ENCODE measurements at regions of chr16 and their contacts with region 1.

Region 1: GRCh38 chr16:4506450-4506849 is 30.3 kb downstream of the HMOX2 start:
- DNase-seq: peak; percentile 62 to 77
- ATAC-seq: peak; percentile 89 to 95
- H3K4me3 ChIP-seq: no peak overlapping the region
- H3K27ac ChIP-seq: no peak overlapping the region
- H3K4me1 ChIP-seq: peaks cover 4% of the 10 kb centered on the region
- CTCF ChIP-seq: peak; percentile 88
- EP300 ChIP-seq: no peak
- POLR2A ChIP-seq: no peak
- RAD21 ChIP-seq: peak; percentile 76 to 82

Region 2: DNA sequence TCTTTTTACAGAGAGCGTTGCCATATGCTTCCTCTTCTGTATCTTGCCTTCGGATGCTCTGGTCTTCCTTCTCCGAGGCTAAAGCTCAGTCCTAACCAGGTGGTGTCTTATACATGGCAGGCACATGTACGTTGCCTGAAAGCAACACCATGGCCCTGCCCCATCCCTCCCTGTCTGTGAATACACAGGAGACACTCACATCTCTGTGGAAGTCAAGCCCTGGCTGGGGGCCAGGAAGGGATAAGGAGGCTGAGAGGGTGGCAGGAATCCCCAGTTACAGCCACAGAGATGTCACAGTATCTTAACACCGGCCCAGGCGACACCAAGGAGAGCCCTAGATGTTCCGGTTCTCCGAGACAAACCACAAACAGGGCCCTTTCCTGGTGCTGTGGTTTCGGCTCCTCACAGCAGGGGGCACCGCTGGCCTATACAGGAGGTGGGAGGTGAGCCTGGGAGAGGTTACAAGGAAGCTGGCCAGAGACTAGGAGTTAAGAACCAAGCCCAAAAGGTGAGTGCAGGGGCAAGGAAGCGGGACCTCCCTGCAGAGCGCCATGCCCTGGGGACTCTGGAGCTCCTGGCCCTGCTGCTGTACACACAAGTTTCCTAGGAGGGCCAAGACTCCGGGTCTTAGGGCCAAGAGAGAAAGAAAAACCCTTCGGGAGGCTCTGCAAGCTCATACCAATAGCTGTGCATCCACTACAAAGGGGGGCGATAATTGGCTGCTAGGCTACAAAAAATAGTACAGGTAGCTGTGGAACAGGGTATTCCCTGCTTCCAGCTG is 306.3 kb before region 1 on chr16:
- CTCF ChIA-PET with region 1: no interaction called
- POLR2A ChIA-PET with region 1: no interaction called
- DNase-seq: peak; percentile 72 to 74
- ATAC-seq: peak; percentile 96
- H3K4me3 ChIP-seq: no peak overlapping the region
- H3K27ac ChIP-seq: peak overlapping the region in 1 of 2 experiments; percentile 65; a peak in 3 of 6 replicates
- H3K4me1 ChIP-seq: peaks cover 7% of the 10 kb centered on the region; the same call in 2 of the 3 replicates
- CTCF ChIP-seq: peak; percentile 66
- EP300 ChIP-seq: no peak
- POLR2A ChIP-seq: no peak
- RAD21 ChIP-seq: peak; percentile 86 to 89

Region 3: DNA sequence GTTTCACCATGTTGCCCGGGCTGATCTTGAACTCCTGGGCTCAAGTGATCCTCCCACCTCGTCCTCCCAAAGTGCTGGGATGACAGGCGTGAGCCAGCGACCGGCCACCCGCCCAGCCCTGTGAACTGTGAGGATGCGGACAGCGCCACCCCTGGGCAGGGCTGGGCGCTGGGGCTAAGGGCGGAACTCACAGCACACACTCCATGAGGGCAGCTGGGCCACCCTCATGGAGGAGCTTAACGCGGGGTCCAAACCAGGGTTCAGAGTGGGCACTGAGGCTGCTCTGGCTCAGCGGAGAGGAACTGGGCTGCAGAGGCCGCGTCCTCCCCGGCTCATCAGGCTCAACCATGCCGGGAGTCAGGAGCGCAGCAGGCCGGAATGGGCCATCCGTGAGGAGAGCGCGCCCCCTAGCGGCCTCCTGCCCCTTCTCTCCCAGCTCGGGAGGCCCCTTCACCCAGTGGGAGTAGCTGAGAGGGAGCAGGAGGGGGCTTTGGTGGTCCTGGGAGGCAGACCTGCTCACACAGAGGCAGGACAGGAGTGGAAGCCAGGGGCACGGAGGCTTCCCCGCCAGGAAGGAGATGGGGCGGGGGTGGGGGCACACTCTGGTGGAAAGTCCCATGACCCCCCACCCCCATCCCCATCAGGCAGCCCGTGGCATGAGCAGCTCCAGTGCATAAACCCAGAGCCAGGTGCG is 103.9 kb before region 1 on chr16:
- CTCF ChIA-PET with region 1: no interaction called
- POLR2A ChIA-PET with region 1: no interaction called
- DNase-seq: peak; percentile 72 to 88
- ATAC-seq: peak; percentile 90 to 93
- H3K4me3 ChIP-seq: 0 out of 3 replicates have a peak overlapping the region, but pooled peaks have one; percentile 28
- H3K27ac ChIP-seq: peak overlapping the region; percentile 64 to 89
- H3K4me1 ChIP-seq: peaks cover 4% of the 10 kb centered on the region; the same call in 1 of the 3 replicates
- CTCF ChIP-seq: peak; percentile 99
- EP300 ChIP-seq: no peak
- POLR2A ChIP-seq: no peak
- RAD21 ChIP-seq: peak; percentile 93 to 99

Region 4: GRCh38 chr16:4416200-4417032 is 90.0 kb before region 1 on chr16 and contains the start of gene CORO7:
- CTCF ChIA-PET with region 1: no interaction called
- POLR2A ChIA-PET with region 1: no interaction called
- DNase-seq: peak; percentile 89 to 93
- ATAC-seq: peak; percentile 86 to 96
- H3K4me3 ChIP-seq: peak within 1 kb of the TSS; percentile 83
- H3K27ac ChIP-seq: peak within 1 kb of the TSS; percentile 73 to 91
- H3K4me1 ChIP-seq: peaks cover 8% of the 10 kb centered on the region
- CTCF ChIP-seq: no peak
- EP300 ChIP-seq: no peak
- POLR2A ChIP-seq: no peak
- RAD21 ChIP-seq: no peak
- polyA plus RNA-seq, gene CORO7: 5.7 and 6.0 TPM in 2 replicates

Region 5: GRCh38 chr16:4435337-4436067 is 70.9 kb before region 1 on chr16:
- CTCF ChIA-PET with region 1: no interaction called
- POLR2A ChIA-PET with region 1: no interaction called
- DNase-seq: no peak
- ATAC-seq: no peak
- H3K4me3 ChIP-seq: no peak overlapping the region
- H3K27ac ChIP-seq: peak overlapping the region in 1 of 2 experiments; percentile 47; a peak in 3 of 6 replicates
- H3K4me1 ChIP-seq: peaks cover 10% of the 10 kb centered on the region
- CTCF ChIP-seq: no peak
- EP300 ChIP-seq: no peak
- POLR2A ChIP-seq: no peak
- RAD21 ChIP-seq: no peak

Region 6: DNA sequence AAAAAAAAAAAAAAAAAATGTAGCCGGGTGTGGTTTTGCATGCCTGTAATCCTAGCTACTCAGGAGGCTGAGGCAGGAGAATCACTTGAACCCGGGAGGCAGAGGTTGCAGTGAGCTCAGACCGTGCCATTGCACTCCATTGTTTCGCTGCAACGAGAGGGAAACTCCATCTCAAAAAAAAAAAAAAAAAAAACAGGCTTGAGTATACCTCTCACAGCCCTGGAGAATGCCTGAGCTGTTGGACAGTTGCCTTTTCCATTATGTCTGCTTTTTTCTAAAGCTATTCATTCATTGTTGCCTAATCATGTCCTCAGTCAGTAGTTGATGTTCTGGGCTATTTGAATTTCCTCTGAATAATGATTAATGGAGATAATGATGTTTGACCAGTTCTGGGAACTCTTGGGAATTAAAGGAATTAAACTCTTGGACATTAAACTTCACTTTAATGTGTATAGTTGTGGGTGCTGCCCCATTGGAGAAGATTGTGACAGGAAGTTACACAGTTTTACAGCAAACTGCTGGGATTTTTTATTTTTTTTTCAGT is 18.4 kb before region 1 on chr16:
- CTCF ChIA-PET with region 1: interaction called, 27 read pairs
- POLR2A ChIA-PET with region 1: no interaction called
- DNase-seq: no peak
- ATAC-seq: peak in 1 of 2 experiments; percentile 51; a peak in 2 of 6 replicates
- H3K4me3 ChIP-seq: no peak overlapping the region
- H3K27ac ChIP-seq: no peak overlapping the region
- H3K4me1 ChIP-seq: peaks cover 18% of the 10 kb centered on the region; the same call in 2 of the 3 replicates
- CTCF ChIP-seq: no peak
- EP300 ChIP-seq: no peak
- POLR2A ChIP-seq: no peak
- RAD21 ChIP-seq: no peak

Region 7: DNA sequence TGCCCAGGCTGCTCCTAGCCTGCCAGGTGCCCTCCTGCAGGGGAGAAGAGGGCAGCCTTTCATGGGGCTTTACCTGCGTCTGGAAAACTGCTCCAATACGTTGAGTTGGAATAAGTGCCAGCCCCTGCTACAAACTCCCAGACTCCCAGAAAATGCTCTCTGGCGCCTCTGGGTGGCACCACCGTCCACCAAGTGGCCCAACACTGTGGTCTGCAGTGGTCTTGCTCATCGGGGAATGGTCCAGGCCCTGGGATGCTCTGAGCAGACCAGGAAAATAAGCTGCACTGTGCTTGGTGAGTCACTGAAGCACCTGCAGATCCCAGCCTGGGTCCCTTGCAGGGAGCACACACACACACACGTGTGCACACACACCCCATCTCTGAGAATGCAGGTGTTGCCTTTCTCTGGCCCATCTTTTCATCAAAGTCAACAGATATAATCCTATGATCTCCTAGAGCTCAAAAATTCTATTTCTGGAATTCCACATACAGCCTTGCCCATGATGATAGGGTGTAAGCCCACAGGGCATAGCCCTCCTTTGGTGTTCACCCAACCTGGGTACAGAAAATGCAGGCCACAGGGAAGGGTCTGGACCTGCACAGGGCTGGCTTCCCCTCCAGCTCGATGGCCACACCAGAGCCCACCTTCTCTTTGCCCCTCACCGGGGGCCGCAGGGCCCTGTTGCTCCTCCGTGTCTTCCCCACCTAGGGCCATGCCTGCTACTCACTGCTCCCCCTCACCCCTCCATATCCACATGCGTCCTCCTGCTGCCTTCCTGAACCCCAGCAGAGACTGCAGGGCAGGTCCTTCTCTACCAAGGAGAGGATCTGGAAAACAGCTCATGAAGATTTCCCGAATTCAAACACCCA is 11.6 kb after region 1 on chr16:
- CTCF ChIA-PET with region 1: interaction called, 100 read pairs
- POLR2A ChIA-PET with region 1: no interaction called
- DNase-seq: peak; percentile 40 to 47
- ATAC-seq: peak; percentile 77 to 89; a peak in 4 of 6 replicates
- H3K4me3 ChIP-seq: no peak overlapping the region
- H3K27ac ChIP-seq: no peak overlapping the region
- H3K4me1 ChIP-seq: no peaks in the 10 kb centered on the region
- CTCF ChIP-seq: peak; percentile 55
- EP300 ChIP-seq: no peak
- POLR2A ChIP-seq: no peak
- RAD21 ChIP-seq: peak; percentile 69 to 80

Region 8: GRCh38 chr16:4574919-4575705 is 68.7 kb after region 1 on chr16:
- CTCF ChIA-PET with region 1: interaction called, 10 read pairs
- POLR2A ChIA-PET with region 1: no interaction called
- DNase-seq: no peak
- ATAC-seq: peak; percentile 33 to 63; a peak in 3 of 6 replicates
- H3K4me3 ChIP-seq: no peak overlapping the region
- H3K27ac ChIP-seq: no peak overlapping the region
- H3K4me1 ChIP-seq: peaks cover 6% of the 10 kb centered on the region
- CTCF ChIP-seq: no peak
- EP300 ChIP-seq: no peak
- POLR2A ChIP-seq: no peak
- RAD21 ChIP-seq: 0 out of 5 replicates have a peak, but pooled peaks of 1 of the 2 experiments have one; percentile 12

Region 9: GRCh38 chr16:4957720-4958509 is 451.5 kb after region 1 on chr16 and contains the start of gene SEC14L5:
- CTCF ChIA-PET with region 1: interaction called, 26 read pairs
- POLR2A ChIA-PET with region 1: no interaction called
- DNase-seq: peak; percentile 98 to 99
- ATAC-seq: peak; percentile 82 to 92
- H3K4me3 ChIP-seq: peak within 1 kb of the TSS; percentile 49
- H3K27ac ChIP-seq: peak within 1 kb of the TSS; percentile 8 to 54; a peak in 4 of 6 replicates
- H3K4me1 ChIP-seq: peaks cover 4% of the 10 kb centered on the region; the same call in 1 of the 3 replicates
- CTCF ChIP-seq: no peak
- EP300 ChIP-seq: no peak
- POLR2A ChIP-seq: no peak
- RAD21 ChIP-seq: no peak
- polyA plus RNA-seq, gene SEC14L5: 0.05 and 0.07 TPM in 2 replicates